Tibial artery (tissue), 4 donors: ENCODE measurements at regions of chr17 and their contacts with region 1.

Region 1: GRCh38 chr17:67993596-67994361 is 2.5 kb downstream of the C17orf58 start:
- DNase-seq: peak in 1 of 2 donors; percentile 91
- H3K4me3 ChIP-seq: peak overlapping the region; percentile 93 to 96
- H3K27ac ChIP-seq: peak overlapping the region; percentile 98 to 99
- H3K4me1 ChIP-seq: peaks cover 0 to 30% (median 21%) of the 10 kb centered on the region in 4 donors
- H3K27me3 ChIP-seq: no peaks in the 10 kb centered on the region
- CTCF ChIP-seq: no peak

Region 2: DNA sequence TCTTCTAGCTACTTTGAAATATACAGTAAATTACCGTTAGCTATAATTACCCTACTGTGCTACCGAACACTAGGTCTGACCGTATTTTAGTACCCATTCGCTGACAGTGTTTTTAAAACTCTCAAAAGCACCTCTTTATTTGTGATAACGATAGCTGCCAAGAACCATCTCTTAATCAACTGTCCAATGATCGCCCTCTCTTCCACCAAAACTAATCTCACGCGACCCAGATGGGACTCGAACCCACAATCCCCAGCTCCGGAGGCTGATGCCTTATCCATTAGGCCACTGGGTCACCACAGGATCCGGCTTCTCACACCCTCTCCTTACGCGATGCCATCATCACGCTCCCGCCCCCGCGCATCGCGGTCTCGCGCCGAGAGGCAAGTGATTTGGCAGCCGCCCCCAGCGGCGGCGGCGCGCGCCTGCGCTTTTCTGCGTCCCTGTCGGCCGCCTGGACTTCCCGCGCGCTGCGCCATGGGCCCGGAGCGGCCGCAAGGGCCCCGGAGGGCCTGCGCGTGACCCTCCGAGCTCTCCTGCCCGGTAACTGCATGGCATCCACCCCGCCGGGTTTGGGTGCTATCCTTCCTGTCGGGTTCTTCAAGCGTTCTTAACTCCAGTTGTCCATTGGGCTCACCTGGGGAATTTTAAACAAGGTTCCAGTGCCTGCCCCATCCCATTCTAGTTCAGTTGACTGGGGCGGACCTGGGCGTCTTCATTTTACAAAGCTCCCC is 26.1 kb after region 1 on chr17:
- intact Hi-C with region 1: loop called (anchors 2 kb)
- DNase-seq: peak; percentile 95 to 98
- H3K4me3 ChIP-seq: peak overlapping the region; percentile 64
- H3K27ac ChIP-seq: peak overlapping the region; percentile 84 to 89
- H3K4me1 ChIP-seq: peaks cover 0 to 6% (median 3%) of the 10 kb centered on the region in 4 donors
- H3K27me3 ChIP-seq: no peaks in the 10 kb centered on the region
- CTCF ChIP-seq: peak; percentile 54 to 71

Region 3: GRCh38 chr17:68035131-68035522 is 41.3 kb after region 1 on chr17:
- intact Hi-C with region 1: no loop called
- DNase-seq: peak; percentile 93 to 96
- H3K4me3 ChIP-seq: peak overlapping the region; percentile 36 to 96
- H3K27ac ChIP-seq: peak overlapping the region; percentile 22 to 25
- H3K4me1 ChIP-seq: peaks cover 0 to 16% (median 8%) of the 10 kb centered on the region in 4 donors
- H3K27me3 ChIP-seq: no peaks in the 10 kb centered on the region
- CTCF ChIP-seq: no peak

Region 4: DNA sequence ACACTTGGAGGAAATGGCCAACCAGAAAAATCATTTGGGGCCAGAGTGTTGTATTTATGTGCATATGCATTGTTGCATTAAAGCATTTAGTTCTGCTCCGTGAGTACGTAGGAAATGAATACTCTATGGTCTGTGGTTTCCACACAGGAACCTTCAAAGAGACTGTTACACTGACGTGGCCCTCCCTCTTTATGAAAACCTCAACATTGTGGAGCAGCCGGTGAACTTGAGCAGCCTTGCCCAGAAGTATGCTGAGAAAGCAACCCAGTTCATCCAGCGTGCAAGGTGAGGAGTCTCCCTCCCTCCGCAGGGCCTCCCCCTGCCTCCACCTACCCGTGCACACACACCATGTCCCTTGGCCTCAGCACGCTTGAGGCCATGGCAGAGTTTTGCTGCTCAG is 362.7 kb after region 1 on chr17:
- intact Hi-C with region 1: no loop called
- DNase-seq: no peak
- H3K4me3 ChIP-seq: no peak overlapping the region
- H3K27ac ChIP-seq: no peak overlapping the region
- H3K4me1 ChIP-seq: peaks cover 0 to 8% (median 0%) of the 10 kb centered on the region in 4 donors
- H3K27me3 ChIP-seq: no peaks in the 10 kb centered on the region
- CTCF ChIP-seq: no peak

Region 5: DNA sequence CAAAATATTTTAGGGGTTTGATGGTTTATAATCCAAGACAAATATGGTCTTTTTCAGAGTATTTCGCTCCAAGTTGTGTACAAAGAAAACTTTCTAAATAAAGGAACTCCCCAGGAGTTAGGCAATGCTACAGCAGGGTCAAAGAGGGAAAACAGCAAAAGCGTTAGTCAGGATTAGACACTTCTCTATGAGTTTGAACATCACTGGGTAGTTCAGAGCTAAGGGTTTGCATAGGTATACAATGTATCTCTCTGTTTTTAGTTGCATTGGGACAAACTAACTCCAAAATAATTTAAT is 572.6 kb after region 1 on chr17:
- intact Hi-C with region 1: no loop called
- DNase-seq: no peak
- H3K4me3 ChIP-seq: no peak overlapping the region
- H3K27ac ChIP-seq: no peak overlapping the region
- H3K4me1 ChIP-seq: no peaks in the 10 kb centered on the region
- H3K27me3 ChIP-seq: no peaks in the 10 kb centered on the region
- CTCF ChIP-seq: no peak